WTC11 (cell line): ENCODE measurements at regions of chr4 and their contacts with region 1.

Region 1: GRCh38 chr4:74675673-74676279 is 118.5 kb downstream of the BTC start:
- DNase-seq: no peak
- ATAC-seq: peak; percentile 81
- H3K4me3 Mint-ChIP-seq: no peak overlapping the region
- H3K27ac Mint-ChIP-seq: no peak overlapping the region
- H3K4me1 Mint-ChIP-seq: peaks cover 3% of the 10 kb centered on the region
- H3K27me3 Mint-ChIP-seq: no peaks in the 10 kb centered on the region
- CTCF ChIP-seq: peak; percentile 37; the same call in 1 of the 2 replicates

Region 2: GRCh38 chr4:74376888-74377483 is 298.8 kb before region 1 on chr4:
- CTCF ChIA-PET with region 1: interaction called, 30 read pairs
- POLR2A ChIA-PET with region 1: no interaction called
- DNase-seq: no peak
- ATAC-seq: peak; percentile 51; the same call in 1 of the 2 replicates
- H3K4me3 Mint-ChIP-seq: no peak overlapping the region
- H3K27ac Mint-ChIP-seq: no peak overlapping the region
- H3K4me1 Mint-ChIP-seq: peaks cover 10% of the 10 kb centered on the region; the same call in 1 of the 2 replicates
- H3K27me3 Mint-ChIP-seq: no peaks in the 10 kb centered on the region
- CTCF ChIP-seq: 0 out of 2 replicates have a peak, but pooled peaks have one; percentile 18

Region 3: DNA sequence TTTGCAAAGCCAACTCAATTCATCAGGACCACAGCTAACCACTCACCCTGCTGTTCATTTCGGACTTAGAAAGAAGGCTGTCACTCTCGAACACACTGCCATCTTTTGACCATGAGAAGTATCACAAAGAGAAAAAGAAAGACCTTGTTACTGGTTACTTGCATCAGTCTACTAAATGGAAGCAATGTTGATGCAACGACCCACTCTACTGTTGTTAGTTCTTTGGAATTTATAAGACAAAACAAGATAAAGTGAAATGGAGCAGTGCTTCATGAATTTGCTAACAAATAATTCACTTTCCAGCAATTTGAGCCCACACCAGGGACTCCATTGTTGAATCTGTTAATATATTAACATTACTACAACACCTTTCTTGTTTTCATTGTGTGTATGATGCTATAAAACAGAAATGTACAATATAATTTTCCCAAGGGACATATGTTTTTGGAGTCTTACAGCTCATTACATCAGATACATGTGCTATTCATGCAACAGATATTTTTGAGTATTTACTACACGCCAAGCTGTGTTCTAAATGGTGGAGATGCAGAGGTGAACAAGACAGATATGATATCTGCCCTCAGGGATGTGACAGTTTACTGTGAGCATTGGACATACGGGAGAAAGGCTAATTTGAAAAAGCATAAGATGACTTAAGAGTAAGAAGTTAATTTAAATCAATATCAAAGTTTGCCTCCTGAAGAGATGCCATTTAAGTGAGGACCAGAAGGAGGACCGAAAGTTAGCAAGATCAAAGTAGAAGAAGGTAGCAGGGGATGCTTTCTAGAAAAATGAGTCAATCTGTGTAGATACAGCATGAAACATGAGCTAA is 143.6 kb before region 1 on chr4:
- CTCF ChIA-PET with region 1: interaction called, 11 read pairs
- POLR2A ChIA-PET with region 1: no interaction called
- DNase-seq: no peak
- ATAC-seq: peak; percentile 96
- H3K4me3 Mint-ChIP-seq: no peak overlapping the region
- H3K27ac Mint-ChIP-seq: no peak overlapping the region
- H3K4me1 Mint-ChIP-seq: peaks cover 4% of the 10 kb centered on the region; the same call in 1 of the 2 replicates
- H3K27me3 Mint-ChIP-seq: no peaks in the 10 kb centered on the region
- CTCF ChIP-seq: no peak

Region 4: DNA sequence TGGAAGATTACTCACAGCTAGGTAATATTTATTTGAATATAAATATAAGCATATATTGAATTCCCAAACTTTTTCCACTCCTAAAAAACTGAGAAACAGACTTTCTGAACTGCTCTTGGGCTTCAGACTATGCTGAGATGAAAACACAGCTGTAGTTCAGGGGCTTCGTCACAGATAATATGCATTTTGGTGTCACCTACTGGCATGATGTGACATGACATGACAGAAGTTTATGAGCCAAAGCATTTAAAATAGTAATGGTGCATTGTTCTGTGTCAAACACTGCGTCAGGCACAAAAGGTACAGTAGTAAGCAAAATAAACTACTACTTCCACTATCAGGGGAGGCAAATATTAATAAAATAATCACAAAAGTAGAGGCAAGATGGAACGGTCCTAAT is 52.7 kb before region 1 on chr4:
- CTCF ChIA-PET with region 1: interaction called, 12 read pairs
- POLR2A ChIA-PET with region 1: no interaction called
- DNase-seq: no peak
- ATAC-seq: peak; percentile 82
- H3K4me3 Mint-ChIP-seq: no peak overlapping the region
- H3K27ac Mint-ChIP-seq: no peak overlapping the region
- H3K4me1 Mint-ChIP-seq: no peaks in the 10 kb centered on the region
- H3K27me3 Mint-ChIP-seq: no peaks in the 10 kb centered on the region
- CTCF ChIP-seq: peak; percentile 20; the same call in 1 of the 2 replicates

Region 5: GRCh38 chr4:74755491-74755921 is 79.7 kb after region 1 on chr4:
- CTCF ChIA-PET with region 1: no interaction called
- POLR2A ChIA-PET with region 1: no interaction called
- DNase-seq: no peak
- ATAC-seq: no peak
- H3K4me3 Mint-ChIP-seq: no peak overlapping the region
- H3K27ac Mint-ChIP-seq: no peak overlapping the region
- H3K4me1 Mint-ChIP-seq: 0 out of 2 replicates have a peak, but pooled peaks cover 3% of the 10 kb centered on the region
- H3K27me3 Mint-ChIP-seq: no peaks in the 10 kb centered on the region
- CTCF ChIP-seq: no peak